ENCODE measurements at regions of chr11 and their contacts with region 1.

Region 1: DNA sequence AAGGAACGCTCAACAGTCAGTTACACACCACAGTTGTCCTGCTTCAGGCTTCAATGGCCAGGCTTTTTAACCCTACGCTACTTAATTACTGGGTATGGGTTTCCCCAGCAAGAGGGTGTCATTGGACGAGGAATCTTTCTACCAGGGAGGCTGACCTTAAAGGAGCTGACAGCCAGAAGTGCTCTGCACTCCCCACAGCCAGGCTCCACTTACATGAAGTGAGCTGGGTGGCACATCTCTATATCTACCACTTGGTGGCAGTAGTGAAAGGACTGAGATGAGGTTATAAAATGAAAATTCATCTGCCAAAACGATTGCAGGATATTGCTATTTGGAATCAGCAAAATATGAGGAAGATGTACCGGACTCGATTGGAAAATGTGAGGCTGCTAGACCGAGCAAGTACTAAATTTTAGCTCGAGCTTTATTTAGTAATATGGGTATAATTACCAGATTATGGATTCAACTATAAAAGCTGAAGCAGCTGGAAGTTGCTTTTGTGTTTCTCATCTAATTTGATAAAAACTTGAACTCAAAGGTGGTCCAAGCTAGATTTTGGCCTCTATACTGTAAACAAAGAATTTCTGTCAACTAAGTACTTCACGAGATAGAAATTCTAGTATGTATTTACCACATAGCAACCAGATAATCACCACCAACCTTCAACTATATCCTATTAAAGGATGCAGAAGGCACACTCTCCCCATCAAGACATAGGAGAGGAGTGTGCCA is 53.9 kb upstream of the CEP126 start:
- DNase-seq: no peak
- ATAC-seq: peak; percentile 88

Region 2: GRCh38 chr11:102007567-102008437 is 146.9 kb after region 1 on chr11:
- intact Hi-C with region 1: loop called (anchors 10 kb)
- DNase-seq: no peak
- ATAC-seq: peak; percentile 70

Measured in sciatic nerve (tissue), 2 donors.